ENCODE measurements at regions of chr20 and their contacts with region 1.

Region 1: DNA sequence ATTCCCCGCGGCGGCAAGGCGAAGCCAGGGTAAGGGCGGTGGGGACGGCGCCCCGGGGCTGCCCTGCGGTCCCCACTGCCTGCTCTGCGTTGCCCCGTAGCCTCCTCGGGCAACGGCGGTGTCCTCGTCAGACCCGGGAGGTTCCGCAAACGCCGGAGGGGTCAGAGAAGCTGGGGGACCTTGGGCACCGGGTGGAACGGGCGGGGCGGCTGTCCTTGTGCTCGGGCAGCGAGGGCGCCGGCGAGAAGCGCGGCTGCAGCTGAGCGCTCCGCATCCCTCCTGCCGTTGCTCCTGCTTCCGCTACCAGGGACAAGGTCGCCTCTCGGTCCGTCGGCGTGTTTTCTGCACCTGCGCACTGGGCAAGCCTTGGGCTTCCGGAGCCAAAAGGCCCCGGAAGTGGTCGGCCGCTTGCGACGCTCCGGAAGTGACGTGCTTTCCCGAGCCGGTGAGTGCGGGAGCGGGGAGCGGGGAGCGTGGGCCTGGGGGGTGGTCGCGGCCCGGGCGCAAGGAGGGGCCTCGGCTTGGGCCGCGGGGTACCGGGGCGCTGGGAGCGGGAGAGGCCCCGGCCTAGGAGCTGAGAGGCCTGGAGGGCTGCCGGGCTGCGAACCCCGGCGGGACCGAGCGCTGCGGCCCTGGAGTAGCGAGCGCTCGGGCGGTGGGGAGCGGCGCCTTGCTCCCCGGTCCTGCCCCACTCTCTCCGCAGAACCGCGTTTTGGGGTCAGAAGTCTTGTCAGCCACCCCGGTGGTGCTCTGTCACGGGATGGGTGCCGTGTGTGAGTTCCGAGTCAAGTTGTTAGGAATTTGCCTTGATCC is at the start of gene MTG2:
- DNase-seq: peak; percentile 88 to 99
- ATAC-seq: peak; percentile 92 to 94 (median 92)
- H3K4me3 ChIP-seq: peak within 1 kb of the TSS; percentile 80
- H3K4me3 Mint-ChIP-seq: peak within 1 kb of the TSS; percentile 86
- H3K27ac ChIP-seq: peak within 1 kb of the TSS; percentile 82
- H3K27ac Mint-ChIP-seq: peak within 1 kb of the TSS; percentile 90 to 98
- H3K4me1 ChIP-seq: peaks cover 14% of the 10 kb centered on the region
- H3K4me1 Mint-ChIP-seq: peaks cover 14 to 28% of the 10 kb centered on the region in 2 donors
- H3K27me3 ChIP-seq: no peaks in the 10 kb centered on the region
- H3K27me3 Mint-ChIP-seq: no peaks in the 10 kb centered on the region
- CTCF ChIP-seq: no peak
- total RNA-seq, gene MTG2: 16.8 to 25.8 (median 25.3) TPM

Region 2: GRCh38 chr20:62143118-62143973 is 39.5 kb before region 1 on chr20 and contains the starts of genes PSMA7 and SS18L1:
- intact Hi-C with region 1: loop called (anchors 2 kb)
- DNase-seq: peak; percentile 86 to 95
- ATAC-seq: peak; percentile 87 to 95 (median 88)
- H3K4me3 ChIP-seq: peak within 1 kb of the TSS; percentile 55
- H3K4me3 Mint-ChIP-seq: peak within 1 kb of the TSS; percentile 91
- H3K27ac ChIP-seq: peak within 1 kb of the TSS; percentile 75
- H3K27ac Mint-ChIP-seq: peak within 1 kb of the TSS; percentile 79 to 90
- H3K4me1 ChIP-seq: peaks cover 30% of the 10 kb centered on the region
- H3K4me1 Mint-ChIP-seq: peaks cover 44 to 54% of the 10 kb centered on the region in 2 donors
- H3K27me3 ChIP-seq: no peaks in the 10 kb centered on the region
- H3K27me3 Mint-ChIP-seq: no peaks in the 10 kb centered on the region
- CTCF ChIP-seq: no peak
- total RNA-seq, gene PSMA7: 154 to 177 (median 168) TPM
- total RNA-seq, gene SS18L1: 19.1 to 26.0 (median 23.7) TPM

Region 3: GRCh38 chr20:62237801-62238571 is 55.2 kb after region 1 on chr20 and contains the start of gene OSBPL2:
- intact Hi-C with region 1: loop called (anchors 2 kb)
- DNase-seq: peak; percentile 100
- ATAC-seq: peak; percentile 97 to 100 (median 97)
- H3K4me3 ChIP-seq: peak within 1 kb of the TSS; percentile 50
- H3K4me3 Mint-ChIP-seq: peak within 1 kb of the TSS; percentile 89
- H3K27ac ChIP-seq: peak within 1 kb of the TSS; percentile 65
- H3K27ac Mint-ChIP-seq: peak within 1 kb of the TSS; percentile 84 to 93
- H3K4me1 ChIP-seq: peaks cover 33% of the 10 kb centered on the region
- H3K4me1 Mint-ChIP-seq: peaks cover 44% of the 10 kb centered on the region in 2 donors
- H3K27me3 ChIP-seq: no peaks in the 10 kb centered on the region
- H3K27me3 Mint-ChIP-seq: peaks cover 0 to 4% of the 10 kb centered on the region in 2 donors
- CTCF ChIP-seq: no peak
- total RNA-seq, gene OSBPL2: 77.9 to 112 (median 104) TPM